CD8-positive, alpha-beta T cell (primary cell): ENCODE measurements at regions of chr19 and their contacts with region 1.

Region 1: GRCh38 chr19:8389891-8390616 is at the start of gene RAB11B:
- DNase-seq: peak; percentile 94 to 100 (median 98)
- ATAC-seq: peak; percentile 87
- H3K4me3 ChIP-seq: peak within 1 kb of the TSS; percentile 62 to 89
- H3K4me3 Mint-ChIP-seq: peak within 1 kb of the TSS; percentile 96
- H3K27ac ChIP-seq: peak within 1 kb of the TSS; percentile 85 to 86
- H3K27ac Mint-ChIP-seq: peak within 1 kb of the TSS; percentile 95
- H3K4me1 ChIP-seq: peaks cover 17% of the 10 kb centered on the region
- H3K4me1 Mint-ChIP-seq: peaks cover 36% of the 10 kb centered on the region
- H3K27me3 ChIP-seq: no peaks in the 10 kb centered on the region
- H3K27me3 Mint-ChIP-seq: no peaks in the 10 kb centered on the region
- CTCF ChIP-seq: no peak
- total RNA-seq, gene RAB11B: 60.2 to 61.4 TPM

Region 2: GRCh38 chr19:8307965-8308866 is 81.8 kb before region 1 on chr19 and contains the start of gene CD320:
- CTCF ChIA-PET with region 1: no interaction called
- POLR2A ChIA-PET with region 1: no interaction called
- intact Hi-C with region 1: loop called in 1 of 2 experiments (anchors 1 kb)
- DNase-seq: peak; percentile 71 to 92 (median 86)
- ATAC-seq: peak; percentile 93
- H3K4me3 ChIP-seq: peak within 1 kb of the TSS; percentile 63 to 64
- H3K4me3 Mint-ChIP-seq: peak within 1 kb of the TSS; percentile 91
- H3K27ac ChIP-seq: peak within 1 kb of the TSS; percentile 64 to 71
- H3K27ac Mint-ChIP-seq: peak within 1 kb of the TSS; percentile 94
- H3K4me1 ChIP-seq: peaks cover 29% of the 10 kb centered on the region
- H3K4me1 Mint-ChIP-seq: peaks cover 31% of the 10 kb centered on the region
- H3K27me3 ChIP-seq: no peaks in the 10 kb centered on the region
- H3K27me3 Mint-ChIP-seq: no peaks in the 10 kb centered on the region
- CTCF ChIP-seq: no peak
- total RNA-seq, gene CD320: 15.7 to 19.1 TPM

Region 3: GRCh38 chr19:8342684-8343482 is 47.2 kb before region 1 on chr19 and contains the start of gene KANK3:
- CTCF ChIA-PET with region 1: no interaction called
- POLR2A ChIA-PET with region 1: no interaction called
- intact Hi-C with region 1: loop called (anchors 1 kb)
- DNase-seq: peak; percentile 84 to 96 (median 91)
- ATAC-seq: peak; percentile 99
- H3K4me3 ChIP-seq: peak within 1 kb of the TSS; percentile 70 to 86
- H3K4me3 Mint-ChIP-seq: peak within 1 kb of the TSS; percentile 79
- H3K27ac ChIP-seq: peak within 1 kb of the TSS; percentile 42 to 78
- H3K27ac Mint-ChIP-seq: peak within 1 kb of the TSS; percentile 22
- H3K4me1 ChIP-seq: peaks cover 13% of the 10 kb centered on the region
- H3K4me1 Mint-ChIP-seq: peaks cover 5% of the 10 kb centered on the region
- H3K27me3 ChIP-seq: peaks cover 0 to 3% of the 10 kb centered on the region in 2 experiments
- H3K27me3 Mint-ChIP-seq: peaks cover 7% of the 10 kb centered on the region
- CTCF ChIP-seq: no peak
- total RNA-seq, gene KANK3: 0.78 to 1.4 TPM

Region 4: GRCh38 chr19:8444645-8445487 is 54.8 kb after region 1 on chr19 and contains the start of gene HNRNPM:
- CTCF ChIA-PET with region 1: no interaction called
- POLR2A ChIA-PET with region 1: interaction called, 3 read pairs
- intact Hi-C with region 1: loop called (anchors 1 kb)
- DNase-seq: peak; percentile 99 to 100 (median 100)
- ATAC-seq: peak; percentile 93
- H3K4me3 ChIP-seq: peak within 1 kb of the TSS; percentile 69 to 81
- H3K4me3 Mint-ChIP-seq: peak within 1 kb of the TSS; percentile 97
- H3K27ac ChIP-seq: peak within 1 kb of the TSS; percentile 93 to 96
- H3K27ac Mint-ChIP-seq: peak within 1 kb of the TSS; percentile 98
- H3K4me1 ChIP-seq: peaks cover 34% of the 10 kb centered on the region
- H3K4me1 Mint-ChIP-seq: peaks cover 40% of the 10 kb centered on the region
- H3K27me3 ChIP-seq: no peaks in the 10 kb centered on the region
- H3K27me3 Mint-ChIP-seq: no peaks in the 10 kb centered on the region
- CTCF ChIP-seq: no peak
- total RNA-seq, gene HNRNPM: 268 to 278 TPM

Region 5: GRCh38 chr19:8526345-8527067 is 136.5 kb after region 1 on chr19:
- CTCF ChIA-PET with region 1: no interaction called
- POLR2A ChIA-PET with region 1: no interaction called
- intact Hi-C with region 1: no loop called
- DNase-seq: no peak
- ATAC-seq: peak; percentile 38
- H3K4me3 ChIP-seq: no peak overlapping the region
- H3K4me3 Mint-ChIP-seq: no peak overlapping the region
- H3K27ac ChIP-seq: no peak overlapping the region
- H3K27ac Mint-ChIP-seq: peak overlapping the region; percentile 49
- H3K4me1 ChIP-seq: peaks cover 5% of the 10 kb centered on the region
- H3K4me1 Mint-ChIP-seq: peaks cover 19% of the 10 kb centered on the region
- H3K27me3 ChIP-seq: no peaks in the 10 kb centered on the region
- H3K27me3 Mint-ChIP-seq: no peaks in the 10 kb centered on the region
- CTCF ChIP-seq: no peak